Activated T-helper 1 cell treated with anti-CD3 and anti-CD28 coated beads, Interleukin-12 subunit alpha, Interleukin-12 subunit beta, Interleukin-2, Interleukin-4 antibody, amounts not matched to agents 30 ng/mL and 10 ng/mL and 1 ng/mL, durations not matched to agents 14 hours and 24 hours and 36 hours (primary cell): ENCODE measurements at regions of chr11 and their contacts with region 1.

Region 1: DNA sequence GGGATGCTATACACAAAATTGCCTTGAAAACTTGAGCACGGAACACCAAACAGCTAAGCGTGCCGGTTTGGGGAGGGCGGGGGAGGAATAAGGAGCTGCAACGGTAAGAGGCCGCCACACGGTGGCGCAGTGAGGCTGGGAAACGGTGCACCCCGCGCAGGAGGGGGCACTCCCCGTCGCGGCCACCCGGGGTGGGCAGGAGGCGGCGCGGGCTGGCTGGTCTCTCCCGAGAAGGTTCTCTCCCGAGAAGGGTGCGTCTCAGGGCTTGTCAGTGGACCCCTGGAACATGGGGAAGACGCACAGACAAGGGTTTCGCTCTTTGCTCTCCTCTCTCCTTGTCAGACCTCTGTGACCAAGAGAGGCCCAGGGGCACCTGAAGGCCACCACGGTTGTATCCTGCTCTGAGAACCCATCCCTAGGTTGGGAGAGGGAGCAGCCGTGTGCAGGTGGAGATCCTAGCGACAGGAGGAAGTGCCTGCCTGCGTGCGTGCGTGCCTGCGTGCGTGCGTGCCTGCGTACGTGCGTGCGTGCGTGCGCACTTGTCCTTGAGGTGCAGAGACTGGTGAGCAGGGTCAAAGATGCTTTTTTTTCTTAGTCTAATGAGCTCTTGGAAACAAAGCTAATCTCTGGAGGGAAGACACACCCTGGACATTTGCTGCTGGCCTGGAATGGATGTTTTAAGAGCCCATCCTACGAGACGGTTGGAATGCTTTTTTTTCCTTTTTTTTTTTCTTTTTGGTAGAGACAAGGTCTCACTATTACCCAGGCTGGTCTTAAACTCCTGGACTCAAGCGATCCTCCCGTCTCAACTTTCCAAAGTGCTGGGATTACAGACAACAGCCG is 18.1 kb upstream of the JAM3 start:
- DNase-seq: peak; percentile 62
- H3K4me3 Mint-ChIP-seq: peak overlapping the region; percentile 13
- H3K27ac Mint-ChIP-seq: no peak overlapping the region
- H3K4me1 Mint-ChIP-seq: peaks cover 6% of the 10 kb centered on the region
- H3K27me3 Mint-ChIP-seq: peaks cover 15% of the 10 kb centered on the region

Region 2: DNA sequence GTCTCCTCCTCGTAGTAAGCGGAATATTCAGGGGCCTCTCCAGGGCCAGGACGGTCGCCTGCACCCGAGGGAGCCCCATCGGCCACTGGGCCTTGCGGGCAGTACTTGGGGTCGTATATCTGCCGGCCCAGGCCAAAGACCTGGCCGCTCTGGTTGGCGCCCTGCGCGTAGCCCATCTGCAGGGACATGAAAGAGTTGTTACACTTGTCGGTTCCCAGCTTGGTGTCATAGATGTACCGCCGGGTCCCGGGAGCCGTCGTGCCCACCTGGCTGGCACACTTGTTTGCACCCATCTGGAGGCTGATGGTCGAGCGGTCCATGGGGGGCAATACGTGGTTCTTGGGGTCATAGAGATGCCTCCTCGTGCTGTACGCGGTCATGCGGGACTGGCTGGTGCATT is 186.0 kb before region 1 on chr11:
- intact Hi-C with region 1: no loop called
- DNase-seq: no peak
- H3K4me3 Mint-ChIP-seq: no peak overlapping the region
- H3K27ac Mint-ChIP-seq: no peak overlapping the region
- H3K4me1 Mint-ChIP-seq: no peaks in the 10 kb centered on the region
- H3K27me3 Mint-ChIP-seq: peaks cover 20% of the 10 kb centered on the region

Region 3: DNA sequence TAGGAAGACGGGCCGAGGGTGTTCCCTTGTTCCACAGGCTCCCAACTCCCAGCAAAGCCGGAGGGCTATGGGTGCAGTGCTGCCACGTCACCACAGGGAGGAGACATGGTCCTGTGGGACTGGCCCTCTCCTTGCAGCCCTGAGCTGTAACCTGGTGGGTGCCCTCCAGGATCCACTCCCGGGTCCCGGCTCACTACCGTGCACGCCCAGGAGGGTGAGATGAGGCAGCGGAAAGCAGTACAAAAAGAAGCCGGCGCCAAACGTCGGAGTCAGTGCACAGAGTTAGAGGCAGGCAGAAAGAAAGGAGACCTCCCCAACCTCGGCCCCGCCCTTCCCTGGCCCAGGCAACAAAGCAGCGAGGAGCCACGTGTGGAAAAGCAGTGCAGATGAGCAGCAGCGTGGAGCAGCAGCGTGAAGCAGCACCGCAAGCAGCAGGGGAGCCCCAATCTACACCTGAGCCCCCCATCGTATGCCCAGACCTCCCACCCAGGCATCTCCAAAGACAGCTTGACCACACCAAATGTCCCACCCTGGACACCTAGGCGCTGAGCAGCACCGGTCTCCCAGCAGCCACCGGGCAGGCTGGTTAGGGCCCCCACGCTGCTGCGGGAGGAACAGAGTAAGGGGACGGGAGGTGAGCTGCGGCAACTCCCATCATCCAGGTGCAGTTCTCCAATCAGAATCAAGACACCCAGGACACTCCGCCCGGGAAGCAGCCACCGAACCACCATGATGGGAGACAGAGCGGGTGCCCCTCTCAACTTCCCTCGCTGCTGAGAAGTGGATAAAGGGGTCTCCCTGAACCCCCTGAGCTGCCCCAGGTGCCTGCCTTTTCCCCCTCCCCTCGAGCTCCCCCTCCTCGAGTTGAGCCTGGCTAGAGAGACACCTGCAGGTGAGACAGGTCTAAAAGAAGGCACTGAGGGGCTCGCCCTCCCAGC is 122.8 kb before region 1 on chr11:
- intact Hi-C with region 1: loop called (anchors 1 kb)
- DNase-seq: peak; percentile 59
- H3K4me3 Mint-ChIP-seq: peak overlapping the region; percentile 79
- H3K27ac Mint-ChIP-seq: peak overlapping the region; percentile 80
- H3K4me1 Mint-ChIP-seq: peaks cover 31% of the 10 kb centered on the region
- H3K27me3 Mint-ChIP-seq: no peaks in the 10 kb centered on the region

Region 4: DNA sequence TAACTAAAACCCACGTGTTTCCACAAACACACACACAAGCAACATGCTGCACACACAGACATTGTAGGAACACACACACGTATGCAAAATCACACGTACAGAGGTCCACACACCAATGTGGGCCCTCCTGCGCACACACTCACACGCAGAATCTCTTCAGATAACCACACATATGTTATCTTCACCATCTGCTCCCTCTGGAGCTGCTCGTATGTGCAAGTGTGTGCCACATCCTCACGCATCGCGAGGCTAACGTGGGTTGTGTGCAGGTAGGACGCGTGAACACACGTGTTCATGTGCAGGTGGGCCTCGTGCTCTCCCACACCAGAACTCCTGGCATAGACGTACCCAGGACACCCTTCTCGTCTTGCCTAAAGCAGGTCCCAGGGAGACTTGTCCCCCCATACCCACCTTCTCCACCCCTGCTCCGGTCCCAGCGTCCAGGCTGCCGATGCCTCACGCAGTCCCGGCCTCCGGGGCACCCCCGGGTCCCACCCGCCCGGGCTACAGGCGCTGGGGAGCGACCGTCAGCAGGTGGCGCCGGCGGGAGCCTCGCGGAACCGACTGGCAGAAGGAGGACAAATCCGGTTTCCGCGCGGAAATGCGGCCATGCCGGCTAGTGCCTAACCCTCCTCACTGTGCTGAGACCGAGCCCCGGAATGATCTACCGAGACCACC is 83.7 kb before region 1 on chr11:
- intact Hi-C with region 1: no loop called
- DNase-seq: peak; percentile 58
- H3K4me3 Mint-ChIP-seq: peak overlapping the region; percentile 86
- H3K27ac Mint-ChIP-seq: peak overlapping the region; percentile 86
- H3K4me1 Mint-ChIP-seq: peaks cover 15% of the 10 kb centered on the region
- H3K27me3 Mint-ChIP-seq: peaks cover 27% of the 10 kb centered on the region

Region 5: GRCh38 chr11:134033696-134034491 is 16.9 kb before region 1 on chr11:
- intact Hi-C with region 1: loop called (anchors 1 kb)
- DNase-seq: peak; percentile 65
- H3K4me3 Mint-ChIP-seq: peak overlapping the region; percentile 24
- H3K27ac Mint-ChIP-seq: peak overlapping the region; percentile 59
- H3K4me1 Mint-ChIP-seq: peaks cover 55% of the 10 kb centered on the region
- H3K27me3 Mint-ChIP-seq: peaks cover 7% of the 10 kb centered on the region

Region 6: GRCh38 chr11:134098566-134099184 is 47.9 kb after region 1 on chr11:
- intact Hi-C with region 1: loop called (anchors 1 kb)
- DNase-seq: no peak
- H3K4me3 Mint-ChIP-seq: no peak overlapping the region
- H3K27ac Mint-ChIP-seq: no peak overlapping the region
- H3K4me1 Mint-ChIP-seq: peaks cover 5% of the 10 kb centered on the region
- H3K27me3 Mint-ChIP-seq: peaks cover 5% of the 10 kb centered on the region

Region 7: DNA sequence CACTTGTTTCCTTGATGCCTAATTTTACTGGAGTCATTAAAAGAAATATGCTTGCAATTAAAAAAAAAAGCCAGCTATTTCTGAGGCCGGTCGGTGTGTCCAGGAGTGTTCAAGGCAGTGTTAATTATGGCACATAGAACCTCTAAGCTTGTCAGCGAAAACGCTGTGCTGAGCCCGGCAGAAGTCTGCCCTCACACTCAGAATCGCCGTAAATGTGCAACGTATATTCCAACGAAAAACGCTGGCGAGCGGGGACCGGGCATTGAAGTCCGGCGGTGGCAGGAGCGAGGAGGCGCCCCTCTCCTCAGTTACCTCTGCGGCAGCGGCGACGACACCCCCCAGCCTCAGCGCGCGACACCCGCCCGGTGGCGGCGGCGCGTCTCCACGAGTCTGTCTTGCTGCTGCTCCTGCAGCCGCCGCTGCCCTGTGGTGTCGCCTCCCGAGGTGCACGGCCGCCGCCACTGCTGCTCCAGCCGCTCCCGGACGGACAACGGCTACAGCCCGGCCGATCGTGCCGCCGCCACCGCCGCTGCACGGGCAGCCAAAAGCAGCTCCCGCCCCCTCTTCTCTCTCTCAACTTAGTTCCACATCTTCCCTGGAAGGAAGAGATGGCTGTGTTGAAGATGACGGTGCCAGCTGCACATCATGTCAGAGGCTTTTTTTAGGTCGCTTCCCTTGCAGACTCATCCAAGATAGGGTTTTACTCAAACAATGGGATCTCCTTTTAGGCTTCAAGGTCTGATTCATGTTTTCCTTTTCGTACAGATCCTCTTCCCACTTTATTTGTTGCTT is 74.1 kb after region 1 on chr11:
- intact Hi-C with region 1: no loop called
- DNase-seq: no peak
- H3K4me3 Mint-ChIP-seq: no peak overlapping the region
- H3K27ac Mint-ChIP-seq: peak overlapping the region; percentile 15
- H3K4me1 Mint-ChIP-seq: peaks cover 18% of the 10 kb centered on the region
- H3K27me3 Mint-ChIP-seq: peaks cover 37% of the 10 kb centered on the region

Region 8: DNA sequence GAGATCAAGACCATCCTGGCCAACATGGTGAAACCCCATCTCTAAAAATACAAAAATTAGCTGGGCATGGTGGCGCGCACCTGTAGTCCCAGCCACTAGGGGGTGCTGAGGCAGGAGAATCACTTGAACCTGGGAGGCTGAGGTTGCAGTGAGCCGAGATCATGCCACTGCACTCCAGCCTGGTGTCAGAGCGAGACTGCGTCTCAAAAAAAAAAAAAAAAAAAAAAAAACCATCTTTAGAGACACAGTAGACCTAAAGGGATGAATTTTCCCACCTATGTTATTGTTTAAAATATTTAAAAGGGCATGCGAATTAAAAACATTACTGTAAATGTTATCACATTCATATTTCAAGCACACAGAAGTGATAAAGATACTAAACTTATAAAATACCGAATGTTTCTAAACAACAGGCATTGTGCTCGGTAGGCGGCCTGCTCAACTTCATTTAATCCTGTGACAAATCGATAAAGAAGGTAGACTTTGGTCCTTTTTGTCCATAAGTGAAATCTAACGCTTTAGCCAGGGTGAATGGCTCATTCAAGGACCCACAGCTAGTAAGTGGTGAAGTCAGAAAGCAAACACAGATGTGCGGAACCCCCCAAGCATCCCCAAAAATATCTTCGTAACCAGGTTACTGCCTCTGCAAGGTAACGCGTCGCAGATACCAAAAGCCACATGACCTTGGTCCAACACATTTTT is 156.9 kb after region 1 on chr11:
- intact Hi-C with region 1: loop called (anchors 5 kb)
- DNase-seq: peak; percentile 59
- H3K4me3 Mint-ChIP-seq: no peak overlapping the region
- H3K27ac Mint-ChIP-seq: no peak overlapping the region
- H3K4me1 Mint-ChIP-seq: peaks cover 5% of the 10 kb centered on the region
- H3K27me3 Mint-ChIP-seq: no peaks in the 10 kb centered on the region